Left cardiac atrium (tissue), 4 donors: ENCODE measurements at regions of chr4 and their contacts with region 1.

Region 1: DNA sequence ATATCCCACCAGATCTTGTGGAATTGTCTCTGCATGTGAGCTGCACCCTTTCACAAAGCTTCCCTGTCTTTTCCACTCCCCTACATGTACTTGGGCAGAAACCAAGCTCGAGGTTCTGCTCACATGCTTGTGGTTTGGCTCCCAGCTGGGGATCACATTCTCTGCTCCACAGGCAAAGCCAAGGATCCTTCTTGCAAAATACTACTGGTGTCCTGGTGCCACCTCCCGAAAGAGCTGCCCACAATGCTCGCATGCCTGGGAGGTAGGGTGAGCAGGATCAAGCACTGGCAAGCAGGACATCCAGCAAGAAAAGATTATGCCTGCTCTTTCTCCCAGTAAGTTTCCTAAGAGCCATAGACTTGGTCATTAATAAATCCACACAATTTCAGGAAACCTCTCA is 45.1 kb upstream of the PPARGC1A start:
- DNase-seq: peak; percentile 65
- ATAC-seq: peak; percentile 72 to 80

Region 2: GRCh38 chr4:23889814-23890341 is 45.0 kb before region 1 on chr4 and contains the start of gene PPARGC1A:
- intact Hi-C with region 1: loop called in 1 of 2 experiments (anchors 5 kb)
- DNase-seq: peak; percentile 70
- ATAC-seq: peak; percentile 86 to 94
- total RNA-seq, gene PPARGC1A: 75.4 to 180 TPM

Region 3: GRCh38 chr4:24195976-24196736 is 261.2 kb after region 1 on chr4:
- intact Hi-C with region 1: loop called in 1 of 2 experiments (anchors 10 kb)
- DNase-seq: peak; percentile 26
- ATAC-seq: peak; percentile 25 to 65

Region 4: GRCh38 chr4:24244663-24245490 is 310.0 kb after region 1 on chr4:
- intact Hi-C with region 1: loop called in 1 of 2 experiments (anchors 5 kb)
- DNase-seq: peak; percentile 69
- ATAC-seq: peak; percentile 86 to 91